ENCODE measurements at regions of chr14 and their contacts with region 1.

Region 1: DNA sequence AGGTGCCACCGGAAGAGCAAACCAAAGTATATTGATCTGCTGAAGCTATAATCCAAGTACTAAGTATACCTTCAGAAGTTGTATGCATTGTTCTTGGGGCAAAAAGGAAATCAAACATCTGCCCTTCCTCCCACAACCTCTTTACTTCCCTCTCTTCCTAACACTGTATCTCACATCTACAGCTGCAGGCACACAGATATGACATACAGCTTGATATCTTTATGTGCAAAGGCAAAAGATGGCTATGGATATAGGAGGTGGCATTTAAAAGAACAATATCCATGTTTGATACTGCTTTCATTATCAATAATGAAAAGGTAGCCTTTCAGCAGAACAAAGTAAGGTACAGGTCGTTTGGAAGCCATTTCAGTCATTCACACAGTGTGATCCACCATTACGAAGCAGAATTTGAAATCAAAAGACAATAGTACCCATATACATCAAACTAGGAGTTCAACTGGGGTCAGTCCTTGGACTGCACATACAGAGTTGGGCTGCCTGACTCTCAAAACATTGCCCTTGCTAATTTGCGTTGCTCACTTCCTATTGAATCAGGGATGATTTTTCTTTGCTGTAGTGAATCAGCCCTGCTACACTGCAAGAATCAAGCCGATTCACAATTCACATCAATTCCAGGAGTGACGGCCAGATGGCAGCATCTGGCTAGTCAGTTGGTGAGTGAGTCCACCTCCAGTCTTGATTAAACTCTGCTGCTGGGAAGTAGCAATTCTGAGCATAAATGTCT is 8.9 kb downstream of the ANG start:
- DNase-seq: peak in 9 of 10 donors; percentile 55 to 86 (median 74)
- H3K4me3 ChIP-seq: peak overlapping the region in 1 of 59 donors; percentile 16
- H3K27ac ChIP-seq: peak overlapping the region in 8 of 59 donors; percentile 5 to 57 (median 26)
- H3K27me3 ChIP-seq: no peaks in the 10 kb centered on the region
- CTCF ChIP-seq: peak; percentile 66 to 97 (median 87)

Region 2: DNA sequence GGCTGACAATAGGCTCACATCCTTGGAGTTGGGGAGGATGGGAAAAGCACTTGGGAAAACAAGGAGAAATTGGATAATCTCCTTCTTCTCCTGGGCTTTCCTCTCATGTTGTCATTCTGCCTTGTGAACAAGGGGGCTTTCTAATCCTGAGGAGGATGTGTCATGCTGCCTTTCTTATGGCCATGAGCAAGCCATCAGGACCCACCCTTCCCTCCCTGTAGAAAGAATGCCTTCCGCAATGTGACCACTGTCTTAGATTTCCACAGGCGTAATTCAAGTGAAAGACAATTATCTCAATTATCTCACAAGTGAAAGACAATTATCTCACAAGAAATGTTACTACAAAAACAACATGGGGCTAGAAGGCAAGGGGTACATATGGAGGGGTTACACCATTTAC is 52.9 kb before region 1 on chr14:
- intact Hi-C with region 1: no loop called
- DNase-seq: no peak
- H3K4me3 ChIP-seq: no peak overlapping the region
- H3K27ac ChIP-seq: no peak overlapping the region
- H3K27me3 ChIP-seq: peaks cover 0 to 61% (median 14%) of the 10 kb centered on the region in 45 donors
- CTCF ChIP-seq: no peak

Region 3: GRCh38 chr14:20714593-20715250 is 17.3 kb after region 1 on chr14:
- intact Hi-C with region 1: no loop called
- DNase-seq: peak in 6 of 10 donors; percentile 38 to 71 (median 61)
- H3K4me3 ChIP-seq: peak overlapping the region in 1 of 59 donors; percentile 9
- H3K27ac ChIP-seq: peak overlapping the region in 27 of 59 donors; percentile 1 to 75 (median 41)
- H3K27me3 ChIP-seq: peaks cover 0 to 14% (median 0%) of the 10 kb centered on the region in 45 donors
- CTCF ChIP-seq: no peak

Region 4: DNA sequence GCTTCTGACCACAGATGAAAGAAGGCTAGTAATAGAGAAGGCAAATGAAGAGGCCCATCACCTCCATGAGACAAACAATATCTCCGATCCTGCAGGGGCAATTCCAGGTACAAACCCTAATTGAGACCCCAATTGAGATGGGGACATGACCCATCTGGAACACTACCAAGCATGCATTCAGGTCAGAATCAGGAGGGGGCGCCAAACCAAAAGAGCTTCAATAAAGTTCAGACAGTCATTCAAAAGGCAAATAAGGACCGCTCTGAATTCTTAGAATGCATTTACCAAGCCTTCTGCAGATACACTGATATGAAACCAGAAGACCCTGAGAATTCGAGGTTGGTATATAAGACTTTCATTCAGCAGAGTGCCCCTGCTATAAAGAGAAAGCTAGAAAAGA is 60.5 kb after region 1 on chr14:
- intact Hi-C with region 1: loop called in 1 of 2 experiments (anchors 5 kb)
- DNase-seq: peak in 3 of 10 donors; percentile 4 to 54 (median 15)
- H3K4me3 ChIP-seq: no peak overlapping the region
- H3K27ac ChIP-seq: no peak overlapping the region
- H3K27me3 ChIP-seq: peaks cover 0 to 6% (median 0%) of the 10 kb centered on the region in 45 donors
- CTCF ChIP-seq: peak in 51 of 56 donors; percentile 14 to 70 (median 40)

Region 5: GRCh38 chr14:20799892-20800544 is 102.6 kb after region 1 on chr14:
- intact Hi-C with region 1: loop called in 1 of 2 experiments (anchors 5 kb)
- DNase-seq: peak in 2 of 10 donors; percentile 40 to 45
- H3K4me3 ChIP-seq: peak overlapping the region; percentile 9 to 79 (median 58)
- H3K27ac ChIP-seq: peak overlapping the region; percentile 81 to 100 (median 97)
- H3K27me3 ChIP-seq: no peaks in the 10 kb centered on the region
- CTCF ChIP-seq: peak in 1 of 56 donors; percentile 11

Region 6: GRCh38 chr14:20873370-20874177 is 176.1 kb after region 1 on chr14:
- intact Hi-C with region 1: loop called in 1 of 2 experiments (anchors 5 kb)
- DNase-seq: peak; percentile 14 to 84 (median 78)
- H3K4me3 ChIP-seq: peak overlapping the region in 17 of 59 donors; percentile 2 to 34 (median 26)
- H3K27ac ChIP-seq: no peak overlapping the region
- H3K27me3 ChIP-seq: peaks cover 0 to 22% (median 0%) of the 10 kb centered on the region in 45 donors
- CTCF ChIP-seq: peak; percentile 45 to 90 (median 77)

Region 7: DNA sequence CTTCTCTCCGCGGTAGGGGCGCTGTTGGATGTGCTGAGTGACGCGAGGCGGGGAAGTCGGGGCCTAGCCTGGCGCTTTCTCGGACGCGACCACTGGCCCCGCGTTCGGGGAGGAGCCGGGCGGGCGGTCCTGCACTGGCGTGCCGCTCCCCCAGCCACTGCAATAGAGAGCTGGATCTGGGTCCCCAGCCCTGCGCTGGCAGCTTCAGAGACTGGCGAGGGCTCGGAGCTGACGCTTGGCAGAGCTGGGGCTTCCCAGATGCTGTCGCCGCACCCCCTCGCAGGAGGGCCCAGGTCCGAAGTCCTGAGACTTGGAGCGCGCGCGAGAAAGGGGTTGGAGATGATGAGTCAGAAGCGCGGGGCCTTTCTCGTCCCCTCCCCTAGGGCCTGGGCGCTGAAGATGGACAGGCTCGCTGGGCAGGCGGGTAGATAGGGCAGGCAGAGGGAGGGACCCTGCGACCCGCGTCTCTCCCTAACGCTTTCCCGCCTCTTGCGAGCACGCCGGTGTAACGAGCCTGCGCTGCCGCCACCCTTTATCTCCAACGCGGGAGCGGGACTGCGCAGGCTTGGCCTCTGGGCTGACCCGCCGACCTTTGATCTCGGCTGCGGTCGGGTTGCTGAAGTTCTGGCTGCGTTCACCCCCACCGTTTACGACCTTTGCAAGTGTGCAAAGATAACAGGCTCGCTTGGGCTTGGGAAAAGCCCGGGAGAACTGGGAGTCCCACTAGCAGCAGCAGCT is 406.4 kb after region 1 on chr14:
- intact Hi-C with region 1: loop called in 1 of 2 experiments (anchors 5 kb)
- DNase-seq: peak; percentile 92 to 99 (median 98)
- H3K4me3 ChIP-seq: peak overlapping the region; percentile 57 to 93 (median 79)
- H3K27ac ChIP-seq: peak overlapping the region; percentile 90 to 100 (median 99)
- H3K27me3 ChIP-seq: no peaks in the 10 kb centered on the region
- CTCF ChIP-seq: peak in 51 of 56 donors; percentile 12 to 83 (median 67)

Measured in dorsolateral prefrontal cortex (tissue), 120 donors.